CD8-positive, alpha-beta T cell (primary cell): ENCODE measurements at regions of chr17 and their contacts with region 1.

Region 1: GRCh38 chr17:29451121-29451742 is 61.1 kb downstream of the TAOK1 start:
- DNase-seq: no peak
- ATAC-seq: no peak
- H3K4me3 ChIP-seq: no peak overlapping the region
- H3K4me3 Mint-ChIP-seq: no peak overlapping the region
- H3K27ac ChIP-seq: no peak overlapping the region
- H3K27ac Mint-ChIP-seq: peak overlapping the region; percentile 30
- H3K4me1 ChIP-seq: peaks cover 6% of the 10 kb centered on the region
- H3K4me1 Mint-ChIP-seq: peaks cover 28% of the 10 kb centered on the region
- H3K27me3 ChIP-seq: no peaks in the 10 kb centered on the region
- H3K27me3 Mint-ChIP-seq: no peaks in the 10 kb centered on the region
- CTCF ChIP-seq: no peak

Region 2: GRCh38 chr17:29807520-29808351 is 356.5 kb after region 1 on chr17:
- CTCF ChIA-PET with region 1: no interaction called
- POLR2A ChIA-PET with region 1: no interaction called
- intact Hi-C with region 1: no loop called
- DNase-seq: peak; percentile 30 to 81 (median 73)
- ATAC-seq: peak; percentile 81
- H3K4me3 ChIP-seq: no peak overlapping the region
- H3K4me3 Mint-ChIP-seq: no peak overlapping the region
- H3K27ac ChIP-seq: no peak overlapping the region
- H3K27ac Mint-ChIP-seq: no peak overlapping the region
- H3K4me1 ChIP-seq: no peaks in the 10 kb centered on the region
- H3K4me1 Mint-ChIP-seq: peaks cover 15% of the 10 kb centered on the region
- H3K27me3 ChIP-seq: no peaks in the 10 kb centered on the region
- H3K27me3 Mint-ChIP-seq: no peaks in the 10 kb centered on the region
- CTCF ChIP-seq: peak; percentile 94

Region 3: DNA sequence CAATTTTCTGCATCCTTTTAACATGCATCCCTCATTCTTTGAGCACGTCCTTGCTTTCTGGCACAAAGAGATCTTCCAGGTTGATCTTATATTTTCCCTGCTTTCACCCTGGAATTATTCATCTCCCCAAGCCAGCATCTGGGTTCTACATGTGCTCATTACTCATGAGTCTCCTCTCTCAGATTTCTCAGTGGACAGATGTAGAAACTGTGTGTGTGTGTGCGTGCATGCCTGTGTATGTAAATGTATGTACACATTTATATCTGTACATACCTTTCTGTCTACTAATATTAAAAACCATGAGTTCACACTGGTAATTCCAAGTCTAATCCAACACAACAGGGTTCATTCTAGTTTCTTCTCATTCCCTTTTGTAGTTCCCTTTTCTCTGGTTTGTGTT is 623.5 kb after region 1 on chr17:
- CTCF ChIA-PET with region 1: no interaction called
- POLR2A ChIA-PET with region 1: no interaction called
- intact Hi-C with region 1: loop called in 1 of 2 experiments (anchors 5 kb)
- DNase-seq: no peak
- ATAC-seq: no peak
- H3K4me3 ChIP-seq: no peak overlapping the region
- H3K4me3 Mint-ChIP-seq: no peak overlapping the region
- H3K27ac ChIP-seq: no peak overlapping the region
- H3K27ac Mint-ChIP-seq: no peak overlapping the region
- H3K4me1 ChIP-seq: no peaks in the 10 kb centered on the region
- H3K4me1 Mint-ChIP-seq: no peaks in the 10 kb centered on the region
- H3K27me3 ChIP-seq: no peaks in the 10 kb centered on the region
- H3K27me3 Mint-ChIP-seq: peaks cover 16% of the 10 kb centered on the region
- CTCF ChIP-seq: no peak